AG04450 (cell line): ENCODE measurements at regions of chrX and their contacts with region 1.

Region 1: GRCh38 chrX:70998411-70999027 is 67.6 kb upstream of the SLC7A3 start:
- DNase-seq: no peak
- H3K4me3 ChIP-seq: no peak overlapping the region
- H3K27ac ChIP-seq: no peak overlapping the region
- H3K27me3 ChIP-seq: no peaks in the 10 kb centered on the region
- CTCF ChIP-seq: peak; percentile 50

Region 2: GRCh38 chrX:71128915-71129765 is 130.6 kb after region 1 on chrX:
- CTCF ChIA-PET with region 1: interaction called, 16 read pairs
- POLR2A ChIA-PET with region 1: no interaction called
- DNase-seq: no peak
- H3K4me3 ChIP-seq: no peak overlapping the region
- H3K27ac ChIP-seq: no peak overlapping the region
- H3K27me3 ChIP-seq: no peaks in the 10 kb centered on the region
- CTCF ChIP-seq: peak; percentile 79